Colonic mucosa (tissue), 4 donors: ENCODE measurements at regions of chr4 and their contacts with region 1.

Region 1: DNA sequence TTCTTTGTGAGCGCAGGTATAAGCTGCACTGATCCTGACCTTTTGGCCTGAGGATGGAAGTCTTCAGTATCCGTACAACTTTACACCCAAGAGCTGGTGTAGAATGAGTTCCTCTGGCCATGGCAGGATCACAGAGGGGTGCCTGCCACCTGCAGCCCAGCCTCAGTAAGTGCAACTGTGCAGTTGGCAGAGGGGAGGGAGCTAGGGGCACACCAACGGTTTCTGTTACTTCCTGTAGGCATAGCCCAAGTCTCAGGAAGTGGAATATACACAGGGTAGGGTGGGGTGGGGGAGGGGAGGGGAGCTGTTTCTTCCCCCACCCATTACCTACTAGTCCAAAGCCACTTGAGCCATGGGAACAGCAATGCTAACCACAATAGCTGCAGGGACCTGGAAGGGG is 85.4 kb upstream of the GBA3 start:
- DNase-seq: peak; percentile 48
- H3K4me3 ChIP-seq: no peak overlapping the region
- H3K27ac ChIP-seq: no peak overlapping the region
- H3K4me1 ChIP-seq: no peaks in the 10 kb centered on the region
- H3K27me3 ChIP-seq: no peaks in the 10 kb centered on the region
- CTCF ChIP-seq: peak; percentile 47

Region 2: DNA sequence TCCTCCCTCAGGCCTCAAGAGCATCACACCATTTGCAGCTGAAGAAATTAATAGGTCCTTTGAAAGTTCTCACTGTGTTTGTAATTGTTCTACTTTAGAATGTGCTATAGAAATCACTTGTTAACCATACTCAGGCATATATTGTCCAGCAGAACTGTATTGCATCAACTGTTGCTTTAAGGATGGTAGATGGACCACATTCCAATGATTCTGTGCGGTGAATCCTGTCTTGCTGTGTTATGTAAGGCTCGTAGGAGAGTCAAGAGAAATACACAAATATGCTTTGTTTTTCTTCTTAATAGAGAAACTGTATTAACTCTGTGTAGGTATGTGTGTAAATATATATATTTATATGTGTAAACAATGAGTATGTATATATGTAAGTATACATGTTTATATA is 85.2 kb before region 1 on chr4:
- intact Hi-C with region 1: loop called (anchors 10 kb)
- DNase-seq: no peak
- H3K4me3 ChIP-seq: no peak overlapping the region
- H3K27ac ChIP-seq: no peak overlapping the region
- H3K4me1 ChIP-seq: peaks cover 1% of the 10 kb centered on the region
- H3K27me3 ChIP-seq: no peaks in the 10 kb centered on the region
- CTCF ChIP-seq: no peak

Region 3: DNA sequence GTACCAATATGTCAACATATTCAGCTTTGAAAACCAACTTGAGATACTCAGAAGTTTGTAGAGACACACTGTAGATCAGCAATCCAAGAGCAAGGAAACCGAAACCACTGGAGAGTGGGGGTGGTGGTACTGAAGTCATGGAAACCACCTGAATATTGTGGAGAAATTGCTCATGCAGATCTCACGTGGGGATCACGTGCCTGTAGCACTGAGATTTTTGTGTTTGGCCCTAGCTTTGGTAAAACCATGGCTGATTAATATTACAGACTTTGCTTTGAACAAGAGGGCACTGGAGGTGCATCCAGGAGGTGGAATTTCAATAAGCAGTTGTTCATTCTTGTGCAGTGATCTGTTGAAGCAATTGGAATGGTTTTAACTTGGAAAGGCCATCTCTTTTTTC is 132.6 kb after region 1 on chr4:
- intact Hi-C with region 1: no loop called
- DNase-seq: no peak
- H3K4me3 ChIP-seq: no peak overlapping the region
- H3K27ac ChIP-seq: no peak overlapping the region
- H3K4me1 ChIP-seq: no peaks in the 10 kb centered on the region
- H3K27me3 ChIP-seq: no peaks in the 10 kb centered on the region
- CTCF ChIP-seq: no peak